A673 (cell line): ENCODE measurements at regions of chr7 and their contacts with region 1.

Region 1: DNA sequence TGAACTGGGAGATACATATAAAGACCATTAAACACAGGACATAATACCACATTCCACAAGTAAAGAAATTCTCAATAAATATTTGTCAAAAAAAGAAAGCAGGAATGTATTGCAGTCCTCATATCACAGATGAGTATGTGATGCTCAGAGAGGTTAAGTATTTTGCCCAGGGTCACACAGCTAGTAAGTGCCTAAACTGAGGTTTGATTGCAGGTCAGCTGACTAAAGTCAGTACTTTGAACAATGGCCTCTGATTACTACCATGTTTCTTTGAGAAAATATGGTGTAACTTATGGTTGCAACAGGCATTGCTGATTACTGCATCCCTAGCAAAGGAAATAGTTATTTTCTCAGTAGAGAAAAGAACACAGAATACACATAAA is 267.1 kb downstream of the ELMO1 start:
- DNase-seq: no peak
- H3K4me3 ChIP-seq: no peak overlapping the region
- H3K27ac ChIP-seq: no peak overlapping the region
- H3K4me1 ChIP-seq: no peaks in the 10 kb centered on the region
- H3K27me3 ChIP-seq: peaks cover 8% of the 10 kb centered on the region
- CTCF ChIP-seq: no peak

Region 2: GRCh38 chr7:36487756-36488336 is 693.7 kb before region 1 on chr7:
- CTCF ChIA-PET with region 1: interaction called, 6 read pairs
- POLR2A ChIA-PET with region 1: no interaction called
- intact Hi-C with region 1: loop called (anchors 5 kb)
- DNase-seq: peak; percentile 67
- H3K4me3 ChIP-seq: no peak overlapping the region
- H3K27ac ChIP-seq: no peak overlapping the region
- H3K4me1 ChIP-seq: no peaks in the 10 kb centered on the region
- H3K27me3 ChIP-seq: peaks cover 50% of the 10 kb centered on the region
- CTCF ChIP-seq: peak; percentile 74

Region 3: DNA sequence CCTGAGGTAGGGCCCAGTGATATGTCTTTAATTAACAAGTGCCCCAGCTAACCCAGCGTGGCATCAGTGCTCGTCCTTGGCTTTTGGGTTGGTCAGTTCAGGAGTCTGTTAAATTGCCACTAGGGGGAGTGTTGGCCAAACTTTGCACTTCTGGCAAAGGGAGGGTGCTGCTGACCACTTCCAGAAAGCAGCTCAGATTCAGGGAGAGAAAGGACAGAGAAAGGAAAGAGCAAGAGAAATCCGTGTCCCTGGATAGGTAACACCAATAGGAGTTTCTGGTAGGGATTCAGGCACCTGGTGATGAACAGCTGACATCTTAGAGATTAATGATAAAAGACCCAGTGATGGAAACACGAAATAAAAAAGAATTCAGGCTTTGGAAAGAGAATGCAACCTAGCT is 214.2 kb before region 1 on chr7:
- CTCF ChIA-PET with region 1: interaction called, 21 read pairs
- POLR2A ChIA-PET with region 1: no interaction called
- intact Hi-C with region 1: loop called (anchors 1 kb)
- DNase-seq: peak; percentile 48
- H3K4me3 ChIP-seq: no peak overlapping the region
- H3K27ac ChIP-seq: no peak overlapping the region
- H3K4me1 ChIP-seq: no peaks in the 10 kb centered on the region
- H3K27me3 ChIP-seq: no peaks in the 10 kb centered on the region
- CTCF ChIP-seq: peak; percentile 75

Region 4: DNA sequence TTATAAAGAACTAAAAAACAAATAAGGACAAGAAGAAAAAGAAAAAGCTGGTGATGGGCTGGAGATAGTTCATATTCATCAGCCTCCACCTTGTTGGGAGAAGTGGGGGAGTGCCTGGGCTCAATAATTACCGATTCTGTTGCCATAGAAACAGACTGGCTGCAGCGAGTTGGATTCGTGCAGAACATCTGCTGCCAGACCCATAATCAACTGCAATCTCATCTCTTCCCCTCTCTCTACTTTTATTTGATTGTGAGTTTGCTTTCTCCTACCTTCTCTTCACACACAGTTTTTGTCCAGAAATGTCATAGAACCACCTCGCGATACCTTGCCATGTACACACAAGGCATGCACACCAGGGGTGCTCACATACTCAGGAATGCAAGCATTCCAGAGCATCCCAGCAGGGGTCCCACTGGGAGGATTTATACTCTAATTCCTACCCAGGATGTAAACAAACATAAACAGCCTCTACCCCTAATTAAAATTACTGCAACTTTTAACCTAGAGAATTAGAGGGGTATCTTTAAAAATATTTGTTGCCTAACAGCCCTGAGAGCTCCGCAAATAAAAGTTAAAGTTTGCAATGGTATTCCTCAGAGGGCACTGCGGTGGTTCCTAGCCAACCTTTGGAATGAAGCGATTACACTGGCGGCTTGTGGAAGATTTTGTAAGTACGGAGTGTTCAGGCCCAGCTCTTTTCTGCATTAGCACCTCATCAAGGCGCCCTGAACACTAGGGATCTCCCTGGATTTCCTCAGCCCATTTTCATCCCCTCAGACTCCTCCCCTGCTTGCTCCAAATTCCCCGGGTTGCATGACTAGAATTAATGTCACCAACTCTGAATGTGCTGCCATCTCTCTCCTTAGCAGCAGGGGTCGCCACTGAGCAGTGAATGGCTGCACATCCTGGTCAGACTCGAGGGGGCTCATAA is 194.8 kb before region 1 on chr7:
- CTCF ChIA-PET with region 1: interaction called, 25 read pairs
- POLR2A ChIA-PET with region 1: no interaction called
- intact Hi-C with region 1: loop called (anchors 1 kb)
- DNase-seq: peak; percentile 77
- H3K4me3 ChIP-seq: no peak overlapping the region
- H3K27ac ChIP-seq: no peak overlapping the region
- H3K4me1 ChIP-seq: no peaks in the 10 kb centered on the region
- H3K27me3 ChIP-seq: no peaks in the 10 kb centered on the region
- CTCF ChIP-seq: peak; percentile 94

Region 5: GRCh38 chr7:37027557-37028341 is 153.8 kb before region 1 on chr7:
- CTCF ChIA-PET with region 1: interaction called, 20 read pairs
- POLR2A ChIA-PET with region 1: no interaction called
- intact Hi-C with region 1: no loop called
- DNase-seq: no peak
- H3K4me3 ChIP-seq: no peak overlapping the region
- H3K27ac ChIP-seq: no peak overlapping the region
- H3K4me1 ChIP-seq: peaks cover 14% of the 10 kb centered on the region
- H3K27me3 ChIP-seq: no peaks in the 10 kb centered on the region
- CTCF ChIP-seq: 0 out of 2 replicates have a peak, but pooled peaks have one; percentile 13

Region 6: DNA sequence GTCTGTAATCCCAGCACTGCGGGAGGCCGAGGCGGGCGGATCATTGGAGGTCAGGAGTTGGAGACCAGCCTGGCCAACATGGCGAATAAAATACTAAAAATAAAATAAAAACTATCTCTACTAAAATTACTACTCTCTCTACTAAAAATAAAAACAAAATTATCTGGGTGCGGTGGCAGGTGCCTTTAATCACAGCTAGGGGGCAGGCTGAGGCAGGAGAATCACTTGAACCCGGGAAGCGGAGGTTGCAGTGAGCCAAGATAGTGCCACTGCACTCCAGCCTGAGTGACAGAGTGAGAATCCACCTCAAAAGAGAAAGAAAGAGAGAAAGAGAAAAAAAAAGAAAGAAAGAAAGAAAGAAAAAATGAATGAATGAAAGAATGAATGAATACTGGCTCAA is 84.3 kb before region 1 on chr7:
- CTCF ChIA-PET with region 1: interaction called, 9 read pairs
- POLR2A ChIA-PET with region 1: no interaction called
- intact Hi-C with region 1: loop called (anchors 1 kb)
- DNase-seq: no peak
- H3K4me3 ChIP-seq: no peak overlapping the region
- H3K27ac ChIP-seq: no peak overlapping the region
- H3K4me1 ChIP-seq: no peaks in the 10 kb centered on the region
- H3K27me3 ChIP-seq: no peaks in the 10 kb centered on the region
- CTCF ChIP-seq: peak; percentile 63